K562 (cell line): ENCODE measurements at regions of chr17 and their contacts with region 1.

Region 1: GRCh38 chr17:35915153-35915969 is 15.2 kb downstream of the RDM1 start:
- DNase-seq: no peak
- ATAC-seq: peak; percentile 12; the same call in 2 of the 3 replicates
- H3K4me3 ChIP-seq: no peak overlapping the region
- H3K27ac ChIP-seq: no peak overlapping the region
- H3K4me1 ChIP-seq: peaks cover 36 to 71% of the 10 kb centered on the region in 2 experiments
- H3K27me3 ChIP-seq: no peaks in the 10 kb centered on the region
- CTCF ChIP-seq: no peak
- EP300 ChIP-seq: no peak
- POLR2A ChIP-seq: no peak
- RAD21 ChIP-seq: no peak

Region 2: DNA sequence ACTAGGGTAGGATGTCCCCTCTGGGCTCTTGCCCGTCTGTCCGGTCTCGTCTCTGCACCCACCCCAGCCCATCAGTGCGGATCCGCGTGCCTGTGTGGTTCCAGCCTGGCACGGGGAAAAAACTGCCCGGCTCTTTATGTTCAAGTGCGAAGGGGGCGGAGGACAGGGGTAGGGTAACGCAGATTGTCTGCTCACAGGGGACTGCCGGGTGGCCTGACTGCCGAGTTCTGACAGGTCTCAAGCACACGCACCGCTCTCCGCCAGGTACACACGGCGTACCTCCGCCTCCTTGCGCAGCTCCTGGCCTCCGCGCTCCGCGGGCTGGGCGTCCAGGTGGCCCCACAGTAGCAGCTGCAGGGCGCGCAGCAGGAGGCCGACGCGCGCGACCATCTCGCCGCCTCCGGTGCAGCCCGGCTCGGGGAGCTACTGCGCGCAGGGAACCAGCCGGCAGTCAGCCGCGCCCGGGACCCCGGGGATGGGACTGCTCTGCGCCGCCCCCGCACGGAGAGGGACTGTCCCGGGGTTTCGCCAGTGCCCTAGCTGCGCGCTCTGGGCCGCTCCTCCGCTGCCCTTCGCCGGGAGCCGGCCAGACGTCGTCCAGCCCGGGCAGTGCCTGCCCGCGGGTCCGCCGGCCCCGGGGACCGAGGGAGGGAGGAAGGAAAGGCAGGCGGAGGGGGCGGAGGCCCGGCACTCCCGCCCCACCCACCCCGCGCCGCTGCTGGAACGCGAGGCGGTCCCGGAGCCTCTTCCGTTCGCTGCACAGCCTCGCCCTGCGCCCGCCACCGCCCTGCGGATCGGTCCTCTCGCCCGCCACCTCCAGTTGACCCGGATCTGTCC is 120.2 kb before region 1 on chr17 and contains the start of gene MMP28:
- CTCF ChIA-PET with region 1: no interaction called
- POLR2A ChIA-PET with region 1: no interaction called
- in situ Hi-C with region 1: no loop called
- intact Hi-C with region 1: no loop called
- DNase-seq: peak; percentile 43 to 74 (median 66)
- ATAC-seq: peak; percentile 82
- H3K4me3 ChIP-seq: peak within 1 kb of the TSS; percentile 4; the same call in 1 of the 2 replicates
- H3K27ac ChIP-seq: no peak within 1 kb of the TSS
- H3K4me1 ChIP-seq: peaks cover 0 to 14% of the 10 kb centered on the region in 2 experiments; a peak in 4 of 5 replicates
- H3K27me3 ChIP-seq: peaks cover 48 to 72% of the 10 kb centered on the region in 2 experiments
- CTCF ChIP-seq: no peak
- EP300 ChIP-seq: no peak
- POLR2A ChIP-seq: no peak
- RAD21 ChIP-seq: no peak
- polyA plus RNA-seq, gene MMP28: not detected

Region 3: GRCh38 chr17:35856603-35857002 is 58.8 kb before region 1 on chr17:
- CTCF ChIA-PET with region 1: no interaction called
- POLR2A ChIA-PET with region 1: no interaction called
- in situ Hi-C with region 1: no loop called
- intact Hi-C with region 1: loop called (anchors 5 kb)
- DNase-seq: no peak
- ATAC-seq: no peak
- H3K4me3 ChIP-seq: no peak overlapping the region
- H3K27ac ChIP-seq: no peak overlapping the region
- H3K4me1 ChIP-seq: no peaks in the 10 kb centered on the region
- H3K27me3 ChIP-seq: no peaks in the 10 kb centered on the region
- CTCF ChIP-seq: no peak
- EP300 ChIP-seq: no peak
- POLR2A ChIP-seq: no peak
- RAD21 ChIP-seq: no peak

Region 4: DNA sequence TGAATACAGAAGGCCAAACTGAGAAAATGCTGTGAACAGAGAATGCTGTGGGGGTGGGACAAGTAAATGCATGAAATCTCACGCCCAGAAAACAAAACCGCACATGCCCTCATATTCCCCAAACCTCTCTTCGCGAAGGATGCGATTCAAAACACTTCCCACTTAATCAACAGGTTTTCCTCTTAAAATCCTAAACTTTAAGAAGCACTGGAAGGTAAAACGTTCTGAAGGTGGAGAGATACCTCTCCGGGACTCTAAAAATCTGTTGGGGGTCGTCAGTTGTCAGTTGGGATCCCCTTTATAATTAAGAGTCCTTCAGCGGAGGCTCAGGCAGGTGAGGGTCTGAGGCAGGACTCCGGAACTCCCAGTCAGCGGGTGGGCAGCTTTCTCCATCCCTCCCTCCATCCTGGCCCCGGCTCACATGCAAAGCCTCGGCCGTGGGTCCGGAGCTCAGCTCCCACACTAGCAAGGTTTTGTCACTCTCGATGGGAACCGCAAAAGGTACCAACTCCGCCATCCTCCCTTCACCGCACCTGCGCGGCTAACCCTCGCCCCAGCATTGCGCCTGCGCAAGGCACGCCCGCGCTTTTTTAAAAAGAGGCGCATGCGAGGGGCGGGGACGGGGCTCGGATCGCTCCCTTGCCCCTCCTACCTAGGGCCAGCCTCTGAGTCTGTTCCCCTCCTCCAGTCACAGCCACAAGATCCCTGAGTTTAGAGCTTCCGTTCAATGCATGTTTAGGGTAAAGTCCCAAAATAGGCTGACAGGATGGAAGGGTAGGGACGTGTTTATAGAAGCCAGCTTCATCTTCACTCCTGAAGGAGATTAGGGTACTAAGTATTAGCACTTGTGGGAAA is 15.1 kb after region 1 on chr17 and contains the start of gene RDM1:
- CTCF ChIA-PET with region 1: no interaction called
- POLR2A ChIA-PET with region 1: interaction called, 22 read pairs
- in situ Hi-C with region 1: no loop called
- intact Hi-C with region 1: no loop called
- DNase-seq: peak; percentile 95 to 98 (median 98)
- ATAC-seq: peak; percentile 99
- H3K4me3 ChIP-seq: peak within 1 kb of the TSS; percentile 48
- H3K27ac ChIP-seq: peak within 1 kb of the TSS; percentile 70
- H3K4me1 ChIP-seq: peaks cover 4 to 13% of the 10 kb centered on the region in 2 experiments
- H3K27me3 ChIP-seq: no peaks in the 10 kb centered on the region
- CTCF ChIP-seq: no peak
- EP300 ChIP-seq: peak; percentile 29
- POLR2A ChIP-seq: peak; percentile 79
- RAD21 ChIP-seq: no peak
- polyA plus RNA-seq, gene RDM1: 8.5 to 11.2 TPM

Region 5: GRCh38 chr17:36027761-36028160 is 112.4 kb after region 1 on chr17:
- CTCF ChIA-PET with region 1: no interaction called
- POLR2A ChIA-PET with region 1: no interaction called
- in situ Hi-C with region 1: no loop called
- intact Hi-C with region 1: no loop called
- DNase-seq: no peak
- ATAC-seq: no peak
- H3K4me3 ChIP-seq: no peak overlapping the region
- H3K27ac ChIP-seq: no peak overlapping the region
- H3K4me1 ChIP-seq: no peaks in the 10 kb centered on the region
- H3K27me3 ChIP-seq: peaks cover 3 to 5% of the 10 kb centered on the region in 2 experiments; a peak in 3 of 5 replicates
- CTCF ChIP-seq: no peak
- EP300 ChIP-seq: no peak
- POLR2A ChIP-seq: no peak
- RAD21 ChIP-seq: no peak